Transverse colon (tissue), 4 donors: ENCODE measurements at regions of chr14 and their contacts with region 1.

Region 1: DNA sequence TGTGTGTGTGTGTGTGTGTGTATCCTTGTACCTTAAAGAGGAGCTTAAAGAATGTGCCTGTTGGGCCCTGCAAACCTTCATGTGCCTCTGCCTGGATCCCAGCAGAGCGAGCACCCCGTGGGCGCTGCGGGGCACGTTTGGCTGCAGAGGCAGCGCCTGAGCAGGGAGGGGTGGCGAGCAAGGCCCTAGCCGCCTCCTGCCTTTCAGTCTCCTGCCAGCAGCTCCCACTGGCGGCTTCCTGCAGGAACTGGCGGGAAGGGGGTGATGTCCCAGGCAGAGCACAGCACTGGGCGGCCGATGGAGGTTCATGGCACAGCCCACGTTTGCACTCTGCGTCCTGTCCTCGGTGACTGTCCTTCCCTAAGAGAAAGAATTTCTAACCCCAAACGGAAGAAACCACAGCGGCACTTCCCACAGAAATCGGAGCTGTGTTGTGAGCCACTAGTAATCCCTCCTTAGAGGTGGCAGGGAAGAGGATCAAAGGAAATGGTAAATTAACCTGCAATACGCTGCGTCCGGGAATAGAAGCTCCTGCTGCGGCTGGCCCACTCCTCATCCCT is 19.8 kb downstream of the ZBTB42 start:
- DNase-seq: peak; percentile 65
- H3K4me3 ChIP-seq: no peak overlapping the region
- H3K27ac ChIP-seq: no peak overlapping the region
- H3K4me1 ChIP-seq: peaks cover 9 to 26% (median 16%) of the 10 kb centered on the region in 4 donors
- H3K27me3 ChIP-seq: no peaks in the 10 kb centered on the region
- CTCF ChIP-seq: peak; percentile 41 to 69 (median 52)
- EP300 ChIP-seq: no peak
- POLR2A ChIP-seq: no peak

Region 2: GRCh38 chr14:104650057-104650981 is 170.4 kb before region 1 on chr14:
- in situ Hi-C with region 1: no loop called
- intact Hi-C with region 1: no loop called
- DNase-seq: peak; percentile 71
- H3K4me3 ChIP-seq: peak overlapping the region in 3 of 4 donors; percentile 11 to 37 (median 23)
- H3K27ac ChIP-seq: no peak overlapping the region
- H3K4me1 ChIP-seq: peaks cover 0 to 11% (median 10%) of the 10 kb centered on the region in 4 donors
- H3K27me3 ChIP-seq: no peaks in the 10 kb centered on the region
- CTCF ChIP-seq: peak; percentile 93 to 100 (median 100)
- EP300 ChIP-seq: no peak
- POLR2A ChIP-seq: no peak

Region 3: DNA sequence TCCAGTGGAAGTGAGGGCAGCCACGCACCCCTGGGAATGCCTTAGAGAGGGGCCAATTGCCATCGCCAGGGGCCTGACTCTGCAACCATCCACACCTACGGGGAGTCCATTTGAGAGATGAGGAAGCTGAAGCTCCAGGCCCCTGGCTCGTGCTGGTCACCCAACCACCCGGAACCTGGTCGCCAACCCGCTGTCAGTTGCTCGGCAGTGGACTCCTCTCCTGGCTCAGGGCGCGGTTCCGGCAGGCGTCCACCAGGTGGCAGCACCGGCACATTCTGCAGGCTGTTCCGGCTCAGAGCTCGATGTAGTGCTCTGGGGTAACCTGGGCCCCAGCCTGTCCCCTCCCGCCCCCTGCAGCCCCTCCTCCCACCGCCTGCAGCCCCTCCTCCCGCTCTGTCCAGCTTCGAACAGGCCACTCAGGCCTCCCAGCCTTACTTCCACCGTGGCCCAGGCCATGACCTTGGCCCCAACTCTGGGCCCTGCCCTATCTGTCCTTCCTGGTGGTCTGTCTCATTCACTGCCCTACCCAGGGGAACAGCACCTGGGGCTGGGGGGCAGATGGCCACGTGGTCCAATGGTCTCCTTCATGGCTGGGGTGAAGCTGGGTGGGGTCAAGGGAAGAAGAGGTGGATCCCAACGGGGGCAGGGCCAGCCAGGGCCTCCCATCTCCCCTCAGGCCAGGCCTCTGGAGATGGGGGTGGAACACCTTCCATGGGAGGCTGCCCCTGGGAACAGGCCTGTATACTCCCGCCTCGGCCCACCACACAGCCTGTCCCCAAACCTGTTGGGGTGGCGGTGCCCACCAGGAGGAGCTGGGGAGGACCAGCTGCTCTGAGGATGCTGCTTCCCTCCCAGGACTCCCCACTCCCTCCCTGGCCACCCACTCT is 52.1 kb before region 1 on chr14:
- in situ Hi-C with region 1: loop called (anchors 5 to 10 kb)
- intact Hi-C with region 1: loop called (anchors 5 kb)
- DNase-seq: peak; percentile 93
- H3K4me3 ChIP-seq: no peak overlapping the region
- H3K27ac ChIP-seq: peak overlapping the region in 3 of 4 donors; percentile 18 to 36 (median 19)
- H3K4me1 ChIP-seq: peaks cover 0 to 10% (median 7%) of the 10 kb centered on the region in 4 donors
- H3K27me3 ChIP-seq: no peaks in the 10 kb centered on the region
- CTCF ChIP-seq: peak; percentile 83 to 97 (median 90)
- EP300 ChIP-seq: no peak
- POLR2A ChIP-seq: no peak

Region 4: GRCh38 chr14:104786091-104786586 is 34.6 kb before region 1 on chr14:
- in situ Hi-C with region 1: no loop called
- intact Hi-C with region 1: loop called (anchors 5 kb)
- DNase-seq: no peak
- H3K4me3 ChIP-seq: no peak overlapping the region
- H3K27ac ChIP-seq: no peak overlapping the region
- H3K4me1 ChIP-seq: peaks cover 0 to 9% (median 4%) of the 10 kb centered on the region in 4 donors
- H3K27me3 ChIP-seq: no peaks in the 10 kb centered on the region
- CTCF ChIP-seq: no peak
- EP300 ChIP-seq: no peak
- POLR2A ChIP-seq: no peak